Mammary epithelial cell (primary cell): ENCODE measurements at regions of chr4 and their contacts with region 1.

Region 1: GRCh38 chr4:3436798-3437581 is 4.8 kb upstream of the HGFAC start:
- DNase-seq: peak; percentile 93
- H3K4me3 ChIP-seq: peak overlapping the region in 1 of 3 experiments; percentile 18
- H3K27ac ChIP-seq: peak overlapping the region; percentile 6
- H3K4me1 ChIP-seq: peaks cover 21% of the 10 kb centered on the region
- H3K27me3 ChIP-seq: no peaks in the 10 kb centered on the region
- CTCF ChIP-seq: no peak

Region 2: GRCh38 chr4:3355266-3355748 is 81.7 kb before region 1 on chr4:
- CTCF ChIA-PET with region 1: no interaction called
- dilution Hi-C with region 1: loop called (anchors 5 kb)
- in situ Hi-C with region 1: loop called in 1 of 2 experiments (anchors 10 kb)
- intact Hi-C with region 1: no loop called
- DNase-seq: no peak
- H3K4me3 ChIP-seq: no peak overlapping the region
- H3K27ac ChIP-seq: no peak overlapping the region
- H3K4me1 ChIP-seq: peaks cover 3% of the 10 kb centered on the region
- H3K27me3 ChIP-seq: no peaks in the 10 kb centered on the region
- CTCF ChIP-seq: no peak

Region 3: GRCh38 chr4:3388471-3389232 is 48.3 kb before region 1 on chr4:
- CTCF ChIA-PET with region 1: no interaction called
- dilution Hi-C with region 1: no loop called
- in situ Hi-C with region 1: no loop called
- intact Hi-C with region 1: loop called (anchors 1 kb)
- DNase-seq: peak; percentile 84
- H3K4me3 ChIP-seq: peak overlapping the region; percentile 73 to 85 (median 81)
- H3K27ac ChIP-seq: peak overlapping the region; percentile 83
- H3K4me1 ChIP-seq: peaks cover 33% of the 10 kb centered on the region
- H3K27me3 ChIP-seq: no peaks in the 10 kb centered on the region
- CTCF ChIP-seq: no peak

Region 4: GRCh38 chr4:3414028-3414780 is 22.8 kb before region 1 on chr4:
- CTCF ChIA-PET with region 1: no interaction called
- dilution Hi-C with region 1: no loop called
- in situ Hi-C with region 1: no loop called
- intact Hi-C with region 1: no loop called
- DNase-seq: no peak
- H3K4me3 ChIP-seq: no peak overlapping the region
- H3K27ac ChIP-seq: no peak overlapping the region
- H3K4me1 ChIP-seq: no peaks in the 10 kb centered on the region
- H3K27me3 ChIP-seq: no peaks in the 10 kb centered on the region
- CTCF ChIP-seq: no peak

Region 5: GRCh38 chr4:3473181-3473950 is 36.4 kb after region 1 on chr4:
- CTCF ChIA-PET with region 1: no interaction called
- dilution Hi-C with region 1: no loop called
- in situ Hi-C with region 1: no loop called
- intact Hi-C with region 1: no loop called
- DNase-seq: no peak
- H3K4me3 ChIP-seq: no peak overlapping the region
- H3K27ac ChIP-seq: no peak overlapping the region
- H3K4me1 ChIP-seq: no peaks in the 10 kb centered on the region
- H3K27me3 ChIP-seq: no peaks in the 10 kb centered on the region
- CTCF ChIP-seq: no peak